Panc1 (cell line): ENCODE measurements at regions of chr3 and their contacts with region 1.

Region 1: GRCh38 chr3:71062952-71063772 is 520.4 kb downstream of the FOXP1 start:
- DNase-seq: no peak
- ATAC-seq: no peak
- H3K4me3 ChIP-seq: peak overlapping the region in 1 of 2 experiments; percentile 48; a peak in 3 of 4 replicates
- H3K27ac ChIP-seq: no peak overlapping the region
- H3K4me1 ChIP-seq: no peaks in the 10 kb centered on the region; the same call in 1 of the 2 replicates
- H3K27me3 ChIP-seq: peaks cover 5% of the 10 kb centered on the region; the same call in 1 of the 2 replicates
- CTCF ChIP-seq: no peak

Region 2: GRCh38 chr3:71112576-71112975 is 49.4 kb after region 1 on chr3:
- CTCF ChIA-PET with region 1: no interaction called
- POLR2A ChIA-PET with region 1: interaction called, 10 read pairs
- in situ Hi-C with region 1: no loop called
- intact Hi-C with region 1: no loop called
- DNase-seq: no peak
- ATAC-seq: no peak
- H3K4me3 ChIP-seq: no peak overlapping the region
- H3K27ac ChIP-seq: no peak overlapping the region
- H3K4me1 ChIP-seq: no peaks in the 10 kb centered on the region
- H3K27me3 ChIP-seq: no peaks in the 10 kb centered on the region
- CTCF ChIP-seq: no peak